PC-9 (cell line): ENCODE measurements at regions of chr2 and their contacts with region 1.

Region 1: DNA sequence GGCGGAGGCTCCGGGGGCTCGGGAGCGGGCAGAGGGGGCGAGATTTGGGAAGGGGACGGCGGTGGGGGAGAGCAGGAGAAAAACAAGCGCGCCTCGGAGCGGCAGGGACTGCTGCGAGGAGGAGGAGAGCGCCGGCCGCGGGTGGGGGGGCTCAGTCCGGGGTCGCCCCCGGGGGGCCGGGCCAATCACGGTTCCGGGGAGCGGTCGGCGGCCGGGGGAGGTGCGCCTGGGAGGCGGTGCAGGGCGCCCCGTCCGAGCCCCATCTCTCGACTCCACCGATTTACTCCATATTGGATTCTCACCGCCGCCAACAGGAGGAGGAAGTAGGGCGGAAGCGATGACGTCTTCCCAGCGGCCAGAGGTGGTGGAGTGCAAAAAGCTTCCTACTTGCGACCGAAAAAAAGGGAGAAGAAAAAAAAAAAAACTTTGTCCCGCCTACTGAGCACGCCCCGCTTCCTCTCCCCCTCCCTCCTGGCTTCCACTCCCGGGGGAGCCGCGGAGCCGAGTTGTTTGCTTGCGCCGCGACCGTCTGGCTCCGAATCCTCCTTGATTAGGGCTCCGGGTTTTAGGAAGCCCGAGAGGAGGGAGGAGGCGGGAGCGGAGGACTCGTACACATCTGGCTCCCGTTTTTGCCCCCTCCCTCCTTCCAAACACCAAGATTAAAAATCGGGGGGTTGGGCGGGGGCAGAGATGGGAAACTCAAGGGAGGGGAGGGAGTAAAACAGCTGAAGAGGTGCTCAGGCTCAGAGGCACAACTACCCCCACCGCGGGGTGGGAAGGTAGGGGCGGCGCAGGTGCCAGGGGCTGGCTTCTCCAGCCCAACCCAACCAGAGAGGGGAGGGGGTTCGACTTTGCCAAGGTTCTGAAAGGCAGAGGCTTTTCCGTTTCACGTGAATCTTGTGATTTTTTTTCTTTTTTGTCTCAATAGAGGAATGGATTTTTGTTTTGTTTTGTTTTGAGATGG is at the start of gene SPRED2:
- DNase-seq: peak; percentile 92
- H3K4me3 ChIP-seq: peak within 1 kb of the TSS; percentile 91
- H3K27ac ChIP-seq: peak within 1 kb of the TSS; percentile 59
- H3K4me1 ChIP-seq: peaks cover 55% of the 10 kb centered on the region
- H3K27me3 ChIP-seq: no peaks in the 10 kb centered on the region
- CTCF ChIP-seq: no peak
- total RNA-seq, gene SPRED2: 33.5 and 33.6 TPM in 2 replicates

Region 2: GRCh38 chr2:65264821-65265670 is 167.5 kb before region 1 on chr2:
- CTCF ChIA-PET with region 1: no interaction called
- POLR2A ChIA-PET with region 1: no interaction called
- intact Hi-C with region 1: loop called (anchors 1 kb)
- DNase-seq: peak; percentile 38 to 76
- H3K4me3 ChIP-seq: no peak overlapping the region
- H3K27ac ChIP-seq: no peak overlapping the region
- H3K4me1 ChIP-seq: peaks cover 9% of the 10 kb centered on the region; the same call in 1 of the 2 replicates
- H3K27me3 ChIP-seq: no peaks in the 10 kb centered on the region
- CTCF ChIP-seq: peak; percentile 92

Region 3: DNA sequence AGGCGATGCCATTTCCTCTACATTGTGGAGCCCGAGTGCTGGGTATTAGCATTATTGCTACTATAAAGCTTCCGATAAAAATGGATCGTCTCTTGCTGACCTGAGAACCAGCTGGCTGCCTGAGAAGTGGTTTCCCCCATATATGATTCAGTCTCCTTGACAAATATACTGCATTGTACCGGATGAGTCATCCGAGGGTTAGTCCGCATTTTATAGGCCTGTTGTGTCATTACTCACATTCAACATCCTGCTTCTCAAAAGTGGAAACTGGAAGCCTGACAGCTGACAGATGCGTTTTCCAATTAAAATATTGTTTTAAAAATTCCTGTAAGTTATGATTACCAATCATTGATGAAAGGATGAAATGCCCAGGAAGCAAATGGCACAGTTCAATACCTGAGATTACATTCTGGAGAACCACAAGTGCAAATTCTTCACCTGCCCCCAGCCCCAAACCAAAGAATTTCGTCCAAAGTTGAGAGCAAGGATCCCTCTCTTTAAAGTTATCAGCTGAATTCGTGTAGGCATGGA is 65.8 kb before region 1 on chr2:
- CTCF ChIA-PET with region 1: no interaction called
- POLR2A ChIA-PET with region 1: no interaction called
- intact Hi-C with region 1: loop called (anchors 2 kb)
- DNase-seq: peak; percentile 57 to 96
- H3K4me3 ChIP-seq: peak overlapping the region; percentile 48; the same call in 1 of the 2 replicates
- H3K27ac ChIP-seq: peak overlapping the region; percentile 76
- H3K4me1 ChIP-seq: peaks cover 49% of the 10 kb centered on the region
- H3K27me3 ChIP-seq: no peaks in the 10 kb centered on the region
- CTCF ChIP-seq: no peak

Region 4: GRCh38 chr2:65464604-65465003 is 32.1 kb after region 1 on chr2:
- CTCF ChIA-PET with region 1: no interaction called
- POLR2A ChIA-PET with region 1: no interaction called
- intact Hi-C with region 1: no loop called
- DNase-seq: no peak
- H3K4me3 ChIP-seq: no peak overlapping the region
- H3K27ac ChIP-seq: no peak overlapping the region
- H3K4me1 ChIP-seq: no peaks in the 10 kb centered on the region
- H3K27me3 ChIP-seq: no peaks in the 10 kb centered on the region
- CTCF ChIP-seq: no peak

Region 5: GRCh38 chr2:65491381-65491909 is 58.9 kb after region 1 on chr2:
- CTCF ChIA-PET with region 1: no interaction called
- POLR2A ChIA-PET with region 1: no interaction called
- intact Hi-C with region 1: loop called (anchors 1 kb)
- DNase-seq: peak; percentile 45 to 77
- H3K4me3 ChIP-seq: no peak overlapping the region
- H3K27ac ChIP-seq: no peak overlapping the region
- H3K4me1 ChIP-seq: peaks cover 15% of the 10 kb centered on the region
- H3K27me3 ChIP-seq: no peaks in the 10 kb centered on the region
- CTCF ChIP-seq: no peak

Region 6: DNA sequence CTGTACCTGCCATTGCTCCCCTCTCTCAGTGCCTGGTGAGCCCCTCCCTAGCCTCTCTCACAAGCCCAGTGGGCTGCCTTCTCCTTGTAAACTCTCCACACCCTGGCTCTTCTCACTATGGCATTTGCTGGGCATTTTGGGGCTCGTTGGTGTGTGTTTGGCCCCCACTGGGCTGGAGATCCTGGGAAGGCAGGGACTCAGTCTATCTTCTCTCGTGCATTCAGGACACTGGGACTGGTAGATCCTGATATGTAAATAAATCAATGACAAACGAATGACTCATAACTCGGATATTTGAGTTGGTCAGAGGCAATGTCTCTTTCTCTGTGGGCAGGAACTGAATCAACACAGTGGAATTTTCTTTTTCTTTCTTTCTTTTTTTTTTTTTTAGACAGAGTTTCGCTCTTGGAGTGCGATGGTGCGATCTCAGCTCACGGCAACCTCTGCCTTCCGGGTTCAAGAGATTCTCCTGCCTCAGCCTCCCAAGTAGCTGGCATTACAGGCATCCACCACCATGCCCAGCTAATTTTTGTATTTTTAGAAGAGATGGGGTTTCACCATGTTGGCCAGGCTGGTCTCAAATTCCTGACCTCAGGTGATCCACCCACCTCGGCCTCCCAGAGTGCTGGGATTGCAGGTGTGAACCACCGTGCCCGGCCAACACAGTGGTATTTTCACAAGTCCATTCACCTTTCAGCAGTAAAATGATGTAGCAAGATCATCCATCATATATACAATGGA is 144.5 kb after region 1 on chr2:
- CTCF ChIA-PET with region 1: no interaction called
- POLR2A ChIA-PET with region 1: interaction called, 13 read pairs
- intact Hi-C with region 1: no loop called
- DNase-seq: peak; percentile 53 to 98
- H3K4me3 ChIP-seq: peak overlapping the region; percentile 21; the same call in 1 of the 2 replicates
- H3K27ac ChIP-seq: peak overlapping the region; percentile 90
- H3K4me1 ChIP-seq: peaks cover 32% of the 10 kb centered on the region
- H3K27me3 ChIP-seq: no peaks in the 10 kb centered on the region
- CTCF ChIP-seq: no peak

Region 7: DNA sequence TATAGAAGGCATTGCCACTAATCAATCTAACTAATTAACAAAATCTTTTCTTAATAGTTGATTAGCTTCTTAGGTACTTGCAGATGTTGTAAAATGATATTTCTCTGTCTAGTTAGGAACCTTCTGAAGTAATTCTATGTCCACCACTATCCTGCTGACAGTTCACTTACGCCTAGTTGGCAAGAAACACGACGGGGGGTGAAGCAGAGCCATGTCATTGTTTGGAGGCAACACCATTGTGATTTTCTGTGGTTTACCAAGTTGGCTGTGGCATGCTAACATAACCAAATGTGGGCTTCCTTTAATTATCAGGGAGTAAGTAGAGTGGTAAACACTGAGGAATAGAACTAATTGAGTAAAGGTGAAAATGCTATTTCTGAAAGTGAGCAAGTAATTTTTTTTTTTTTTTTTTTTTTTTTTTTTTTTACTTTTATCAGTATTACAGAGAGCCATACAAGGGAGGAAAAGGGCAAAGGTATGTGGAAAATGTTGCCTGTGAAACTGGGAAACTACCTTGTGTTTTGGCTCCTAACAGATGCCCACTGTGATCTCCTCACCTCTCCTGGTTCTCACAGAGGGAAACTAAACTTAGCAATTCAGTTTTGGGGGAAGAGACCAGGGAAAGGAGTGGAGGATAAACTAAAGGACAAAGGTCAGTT is 1129.3 kb after region 1 on chr2:
- CTCF ChIA-PET with region 1: no interaction called
- POLR2A ChIA-PET with region 1: no interaction called
- intact Hi-C with region 1: no loop called
- DNase-seq: no peak
- H3K4me3 ChIP-seq: no peak overlapping the region
- H3K27ac ChIP-seq: no peak overlapping the region
- H3K4me1 ChIP-seq: 0 out of 2 replicates have a peak, but pooled peaks cover 8% of the 10 kb centered on the region
- H3K27me3 ChIP-seq: no peaks in the 10 kb centered on the region
- CTCF ChIP-seq: no peak